Mammary epithelial cell (primary cell): ENCODE measurements at regions of chr15 and their contacts with region 1.

Region 1: GRCh38 chr15:38354315-38354929 is 99.5 kb upstream of the FAM98B start:
- DNase-seq: peak; percentile 34
- H3K4me3 ChIP-seq: no peak overlapping the region
- H3K27ac ChIP-seq: no peak overlapping the region
- H3K4me1 ChIP-seq: no peaks in the 10 kb centered on the region
- H3K27me3 ChIP-seq: no peaks in the 10 kb centered on the region
- CTCF ChIP-seq: peak; percentile 76 to 83

Region 2: DNA sequence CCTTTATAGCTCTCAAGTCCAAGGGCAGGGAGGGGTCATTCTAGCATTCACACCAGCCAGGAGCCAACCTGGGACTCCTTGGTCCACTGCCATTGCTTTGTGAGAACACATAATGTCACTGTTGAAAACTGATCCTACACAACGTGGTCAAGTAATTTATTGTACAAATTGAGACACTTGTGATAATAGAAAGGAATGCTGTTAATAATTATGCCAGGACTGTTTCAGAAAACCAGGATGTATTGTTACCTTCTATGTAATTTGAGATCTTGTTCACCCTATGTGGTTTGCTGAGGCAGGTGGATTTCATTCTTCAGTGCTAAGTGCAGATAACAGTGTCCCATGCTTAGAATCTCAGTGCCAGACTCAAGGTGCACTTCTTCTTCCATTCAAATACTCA is 386.6 kb before region 1 on chr15:
- CTCF ChIA-PET with region 1: no interaction called
- dilution Hi-C with region 1: no loop called
- in situ Hi-C with region 1: no loop called
- intact Hi-C with region 1: no loop called
- DNase-seq: no peak
- H3K4me3 ChIP-seq: no peak overlapping the region
- H3K27ac ChIP-seq: no peak overlapping the region
- H3K4me1 ChIP-seq: no peaks in the 10 kb centered on the region
- H3K27me3 ChIP-seq: peaks cover 2% of the 10 kb centered on the region
- CTCF ChIP-seq: no peak

Region 3: GRCh38 chr15:38072348-38073177 is 281.9 kb before region 1 on chr15:
- CTCF ChIA-PET with region 1: no interaction called
- dilution Hi-C with region 1: no loop called
- in situ Hi-C with region 1: no loop called
- intact Hi-C with region 1: loop called (anchors 1 kb)
- DNase-seq: peak; percentile 88
- H3K4me3 ChIP-seq: peak overlapping the region; percentile 25 to 50 (median 49)
- H3K27ac ChIP-seq: peak overlapping the region; percentile 92
- H3K4me1 ChIP-seq: peaks cover 72% of the 10 kb centered on the region
- H3K27me3 ChIP-seq: no peaks in the 10 kb centered on the region
- CTCF ChIP-seq: peak in 1 of 2 donors; percentile 46

Region 4: DNA sequence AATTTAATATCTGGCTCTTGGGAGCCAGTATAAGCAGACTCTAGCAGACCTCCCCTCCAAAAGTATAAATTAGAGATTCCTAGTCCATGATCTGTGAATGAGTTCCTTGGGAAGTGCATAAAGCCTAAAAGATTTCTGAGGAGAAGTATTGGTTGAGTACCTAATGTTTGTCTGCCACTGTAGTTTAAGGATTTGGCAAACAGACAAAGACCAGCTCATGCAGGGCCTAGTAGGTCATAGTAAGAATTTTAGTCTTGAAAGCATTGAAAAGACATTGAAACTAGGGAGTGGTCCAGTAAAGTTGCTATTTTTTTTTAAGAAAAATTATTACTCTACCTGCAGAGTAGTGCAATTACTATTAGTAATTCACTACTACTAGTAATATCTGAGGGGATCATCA is 34.2 kb before region 1 on chr15:
- CTCF ChIA-PET with region 1: no interaction called
- dilution Hi-C with region 1: no loop called
- in situ Hi-C with region 1: no loop called
- intact Hi-C with region 1: no loop called
- DNase-seq: no peak
- H3K4me3 ChIP-seq: no peak overlapping the region
- H3K27ac ChIP-seq: no peak overlapping the region
- H3K4me1 ChIP-seq: peaks cover 5% of the 10 kb centered on the region
- H3K27me3 ChIP-seq: no peaks in the 10 kb centered on the region
- CTCF ChIP-seq: no peak

Region 5: GRCh38 chr15:38389924-38390542 is 35.6 kb after region 1 on chr15:
- CTCF ChIA-PET with region 1: no interaction called
- dilution Hi-C with region 1: no loop called
- in situ Hi-C with region 1: no loop called
- intact Hi-C with region 1: loop called (anchors 2 kb)
- DNase-seq: peak; percentile 47
- H3K4me3 ChIP-seq: no peak overlapping the region
- H3K27ac ChIP-seq: no peak overlapping the region
- H3K4me1 ChIP-seq: no peaks in the 10 kb centered on the region
- H3K27me3 ChIP-seq: no peaks in the 10 kb centered on the region
- CTCF ChIP-seq: peak; percentile 89 to 95

Region 6: GRCh38 chr15:38414357-38414756 is 59.9 kb after region 1 on chr15:
- CTCF ChIA-PET with region 1: no interaction called
- dilution Hi-C with region 1: no loop called
- in situ Hi-C with region 1: no loop called
- intact Hi-C with region 1: loop called (anchors 1 kb)
- DNase-seq: peak; percentile 53
- H3K4me3 ChIP-seq: no peak overlapping the region
- H3K27ac ChIP-seq: no peak overlapping the region
- H3K4me1 ChIP-seq: no peaks in the 10 kb centered on the region
- H3K27me3 ChIP-seq: peaks cover 9% of the 10 kb centered on the region
- CTCF ChIP-seq: peak; percentile 80